Mammary epithelial cell (primary cell): ENCODE measurements at regions of chr20 and their contacts with region 1.

Region 1: GRCh38 chr20:57718490-57719271 is 8.9 kb upstream of the PMEPA1 start:
- DNase-seq: peak; percentile 97
- H3K4me3 ChIP-seq: peak overlapping the region; percentile 41 to 56 (median 49)
- H3K27ac ChIP-seq: no peak overlapping the region
- H3K4me1 ChIP-seq: peaks cover 45% of the 10 kb centered on the region
- H3K27me3 ChIP-seq: no peaks in the 10 kb centered on the region
- CTCF ChIP-seq: no peak

Region 2: DNA sequence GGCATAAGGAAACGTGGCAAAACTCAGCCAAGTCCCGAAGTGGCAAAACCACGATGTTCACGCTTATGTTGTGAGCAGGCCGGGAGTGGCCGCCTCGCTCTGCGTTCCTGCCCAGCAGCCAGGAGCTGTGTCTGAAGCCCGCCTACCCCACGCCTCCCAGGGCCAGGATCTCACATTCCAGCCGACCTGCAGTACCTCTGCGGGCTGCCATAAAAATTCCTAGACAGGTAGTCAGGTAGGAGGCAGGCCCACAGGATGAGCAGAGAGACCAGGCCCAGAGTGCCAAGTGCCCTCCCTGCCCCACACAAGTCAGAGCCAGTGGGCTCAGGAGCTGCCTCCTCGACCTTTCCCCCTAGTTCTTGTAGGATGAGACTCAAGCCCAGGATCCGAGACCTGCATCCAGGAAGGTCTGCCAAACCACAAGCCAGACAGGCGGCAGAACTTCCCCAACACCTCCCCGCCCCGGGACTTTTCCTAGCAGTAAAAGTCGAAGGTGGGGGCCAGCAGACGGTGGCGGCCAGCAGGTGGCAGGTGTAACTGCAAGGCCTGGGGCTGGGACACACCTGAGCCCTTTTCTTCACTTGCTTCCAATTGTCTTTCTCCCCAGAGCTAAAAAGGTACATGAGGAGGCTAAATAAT is 25.6 kb before region 1 on chr20:
- CTCF ChIA-PET with region 1: interaction called, 3 read pairs
- dilution Hi-C with region 1: no loop called
- in situ Hi-C with region 1: no loop called
- intact Hi-C with region 1: loop called (anchors 1 kb)
- DNase-seq: peak; percentile 99
- H3K4me3 ChIP-seq: no peak overlapping the region
- H3K27ac ChIP-seq: peak overlapping the region; percentile 88
- H3K4me1 ChIP-seq: peaks cover 93% of the 10 kb centered on the region
- H3K27me3 ChIP-seq: no peaks in the 10 kb centered on the region
- CTCF ChIP-seq: peak; percentile 49 to 69

Region 3: GRCh38 chr20:57844626-57845596 is 126.2 kb after region 1 on chr20:
- CTCF ChIA-PET with region 1: no interaction called
- dilution Hi-C with region 1: no loop called
- in situ Hi-C with region 1: no loop called
- intact Hi-C with region 1: no loop called
- DNase-seq: no peak
- H3K4me3 ChIP-seq: no peak overlapping the region
- H3K27ac ChIP-seq: no peak overlapping the region
- H3K4me1 ChIP-seq: no peaks in the 10 kb centered on the region
- H3K27me3 ChIP-seq: no peaks in the 10 kb centered on the region
- CTCF ChIP-seq: no peak

Region 4: GRCh38 chr20:57902290-57902872 is 183.7 kb after region 1 on chr20:
- CTCF ChIA-PET with region 1: no interaction called
- dilution Hi-C with region 1: no loop called
- in situ Hi-C with region 1: no loop called
- intact Hi-C with region 1: loop called (anchors 5 kb)
- DNase-seq: peak; percentile 84
- H3K4me3 ChIP-seq: no peak overlapping the region
- H3K27ac ChIP-seq: no peak overlapping the region
- H3K4me1 ChIP-seq: peaks cover 32% of the 10 kb centered on the region
- H3K27me3 ChIP-seq: peaks cover 4% of the 10 kb centered on the region
- CTCF ChIP-seq: peak; percentile 34 to 44